SK-N-SH (cell line): ENCODE measurements at regions of chr1 and their contacts with region 1.

Region 1: DNA sequence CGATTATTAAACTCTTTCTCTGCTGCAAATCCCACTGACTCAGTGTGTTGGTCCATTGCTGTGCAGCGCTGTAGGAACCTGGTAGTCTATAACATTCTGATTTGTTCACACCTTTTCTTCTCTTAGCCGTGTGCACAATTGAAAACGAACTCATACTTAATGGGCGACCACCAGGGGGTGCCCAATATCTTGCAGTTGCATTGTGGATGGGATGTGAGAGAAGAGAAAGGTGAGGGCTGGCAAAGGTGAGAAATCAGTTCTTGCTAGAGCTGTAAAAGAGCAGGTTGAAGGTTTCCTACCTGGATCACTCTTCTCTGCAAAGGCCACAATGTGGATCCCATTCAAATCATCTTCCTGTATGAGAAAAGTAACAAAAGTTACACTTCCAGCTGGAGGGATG is 51.0 kb downstream of the CASQ2 start:
- DNase-seq: peak; percentile 26
- H3K4me3 ChIP-seq: no peak overlapping the region; a peak in 2 of 4 replicates
- H3K27ac ChIP-seq: peak overlapping the region in 1 of 2 experiments; percentile 48; a peak in 1 of 4 replicates
- H3K4me1 ChIP-seq: peaks cover 0 to 24% of the 10 kb centered on the region in 2 experiments; a peak in 2 of 4 replicates
- H3K27me3 ChIP-seq: peaks cover 7% of the 10 kb centered on the region; the same call in 1 of the 2 replicates
- CTCF ChIP-seq: peak; percentile 42
- EP300 ChIP-seq: no peak
- RAD21 ChIP-seq: peak; percentile 62

Region 2: GRCh38 chr1:115706587-115707425 is 10.7 kb before region 1 on chr1:
- CTCF ChIA-PET with region 1: interaction called, 24 read pairs
- POLR2A ChIA-PET with region 1: interaction called, 4 read pairs
- DNase-seq: peak; percentile 45
- H3K4me3 ChIP-seq: no peak overlapping the region; a peak in 1 of 4 replicates
- H3K27ac ChIP-seq: no peak overlapping the region
- H3K4me1 ChIP-seq: no peaks in the 10 kb centered on the region; a peak in 1 of 4 replicates
- H3K27me3 ChIP-seq: no peaks in the 10 kb centered on the region; the same call in 1 of the 2 replicates
- CTCF ChIP-seq: peak; percentile 76
- EP300 ChIP-seq: no peak
- RAD21 ChIP-seq: peak; percentile 47

Region 3: DNA sequence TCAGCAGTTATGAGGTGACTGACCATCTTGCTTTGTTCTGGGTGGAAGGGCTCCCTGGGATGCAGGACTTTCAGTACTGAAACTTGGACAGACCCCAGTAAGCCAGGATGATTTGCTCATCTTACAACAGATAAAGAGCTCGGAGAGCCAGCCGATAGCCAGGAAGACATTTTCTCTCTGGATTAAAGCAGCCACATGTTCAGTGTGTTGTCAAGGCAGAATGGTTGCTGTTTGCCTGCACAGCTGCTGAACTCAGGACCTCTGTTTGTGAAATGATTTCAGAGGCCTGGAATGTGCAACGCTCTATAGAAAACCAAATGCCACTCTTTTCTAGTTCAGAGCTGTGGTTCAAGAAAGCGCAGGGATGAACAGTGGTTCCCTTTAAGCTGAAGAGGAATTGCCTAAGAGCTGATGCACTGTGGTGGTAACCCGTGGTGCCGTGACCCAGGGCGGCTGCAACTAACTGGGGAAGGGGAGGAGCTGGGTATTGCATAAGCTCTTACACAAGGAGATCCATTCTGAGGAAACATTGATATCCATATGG is 10.2 kb after region 1 on chr1:
- CTCF ChIA-PET with region 1: interaction called, 11 read pairs
- POLR2A ChIA-PET with region 1: no interaction called
- DNase-seq: no peak
- H3K4me3 ChIP-seq: no peak overlapping the region
- H3K27ac ChIP-seq: no peak overlapping the region
- H3K4me1 ChIP-seq: no peaks in the 10 kb centered on the region
- H3K27me3 ChIP-seq: peaks cover 8% of the 10 kb centered on the region; the same call in 1 of the 2 replicates
- CTCF ChIP-seq: no peak
- EP300 ChIP-seq: no peak
- RAD21 ChIP-seq: no peak

Region 4: GRCh38 chr1:115764541-115764940 is 47.0 kb after region 1 on chr1:
- CTCF ChIA-PET with region 1: interaction called, 65 read pairs
- POLR2A ChIA-PET with region 1: no interaction called
- DNase-seq: peak; percentile 45
- H3K4me3 ChIP-seq: no peak overlapping the region
- H3K27ac ChIP-seq: no peak overlapping the region
- H3K4me1 ChIP-seq: no peaks in the 10 kb centered on the region
- H3K27me3 ChIP-seq: no peaks in the 10 kb centered on the region; the same call in 1 of the 2 replicates
- CTCF ChIP-seq: peak; percentile 52
- EP300 ChIP-seq: no peak
- RAD21 ChIP-seq: peak; percentile 67

Region 5: DNA sequence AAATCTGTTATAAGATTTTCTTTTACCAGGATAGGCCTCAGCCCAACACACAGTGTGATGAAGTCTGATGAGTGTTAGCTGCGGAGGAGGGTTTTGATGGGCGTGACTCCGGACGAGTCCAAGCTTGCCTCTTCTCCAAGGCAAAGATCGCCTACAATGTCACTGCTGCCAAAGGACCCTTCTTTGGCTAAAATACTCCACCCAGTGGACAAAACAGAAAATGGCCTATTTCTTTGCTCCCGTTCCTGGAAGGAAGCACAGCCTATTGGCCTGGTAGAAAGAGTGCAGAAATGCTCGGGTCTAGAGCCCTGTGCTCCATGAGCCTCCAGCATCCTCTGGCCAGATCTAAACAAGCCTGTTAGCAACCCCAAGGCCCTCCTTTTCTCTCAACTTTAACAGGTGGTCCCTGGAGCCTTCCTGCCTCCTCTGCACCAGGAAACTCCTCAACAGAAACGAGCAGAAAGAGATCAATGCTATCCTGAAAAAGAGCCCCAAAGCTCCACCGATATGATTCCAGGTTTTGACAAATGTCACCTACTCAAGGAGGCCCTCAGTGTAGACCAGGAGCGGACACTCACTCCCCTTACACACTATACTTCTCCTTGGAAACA is 54.4 kb after region 1 on chr1:
- CTCF ChIA-PET with region 1: interaction called, 65 read pairs
- POLR2A ChIA-PET with region 1: no interaction called
- DNase-seq: peak; percentile 68
- H3K4me3 ChIP-seq: no peak overlapping the region; a peak in 1 of 4 replicates
- H3K27ac ChIP-seq: no peak overlapping the region
- H3K4me1 ChIP-seq: peaks cover 0 to 4% of the 10 kb centered on the region in 2 experiments; a peak in 1 of 4 replicates
- H3K27me3 ChIP-seq: no peaks in the 10 kb centered on the region; the same call in 1 of the 2 replicates
- CTCF ChIP-seq: peak; percentile 74
- EP300 ChIP-seq: no peak
- RAD21 ChIP-seq: peak; percentile 93